ENCODE measurements at regions of chr20 and their contacts with region 1.

Region 1: GRCh38 chr20:32674362-32674789 is 635 bp upstream of the C20orf203 start:
- DNase-seq: peak; percentile 64
- ATAC-seq: peak; percentile 51
- H3K4me3 ChIP-seq: peak overlapping the region in 1 of 3 experiments; percentile 71; a peak in 1 of 6 replicates
- H3K27ac ChIP-seq: no peak overlapping the region
- H3K4me1 ChIP-seq: peaks cover 65% of the 10 kb centered on the region
- H3K27me3 ChIP-seq: no peaks in the 10 kb centered on the region
- CTCF ChIP-seq: peak; percentile 92
- EP300 ChIP-seq: no peak
- POLR2A ChIP-seq: no peak
- RAD21 ChIP-seq: peak; percentile 98

Region 2: DNA sequence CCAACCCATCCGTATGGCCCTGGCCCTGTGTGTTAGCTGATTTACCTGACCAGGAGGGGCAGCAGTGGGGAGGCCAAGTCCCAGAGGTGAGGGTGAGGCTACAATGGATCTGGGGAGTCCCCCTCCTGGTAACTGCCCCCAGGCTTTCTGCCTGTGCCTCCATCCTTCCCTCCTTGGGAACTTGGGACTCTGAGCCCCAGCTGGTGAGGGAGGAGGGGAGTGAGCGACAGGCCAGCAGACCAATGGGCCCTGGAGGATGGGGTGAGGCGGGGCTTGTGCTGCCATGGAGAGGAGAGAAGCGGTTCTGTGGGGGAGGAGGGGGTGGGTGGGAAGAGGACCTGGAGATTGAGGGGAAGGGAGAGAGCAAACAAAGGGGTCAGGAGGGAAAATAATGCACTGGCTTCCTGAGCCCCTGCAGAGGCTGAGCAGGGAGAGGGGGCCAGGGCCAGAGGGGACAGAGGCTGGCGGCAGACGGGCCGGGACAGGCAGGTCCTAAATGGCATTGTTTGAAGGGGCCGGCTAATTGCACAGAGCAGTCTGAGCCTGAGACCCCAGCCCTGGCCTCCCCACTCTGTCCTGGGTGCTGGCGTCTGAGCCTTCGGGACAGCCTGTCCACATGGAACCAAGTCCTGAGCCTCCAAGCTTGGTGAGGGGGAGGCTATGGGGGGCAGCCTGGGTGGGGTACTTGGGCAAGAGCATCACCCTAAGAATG is 105.3 kb after region 1 on chr20:
- CTCF ChIA-PET with region 1: interaction called, 203 read pairs
- POLR2A ChIA-PET with region 1: interaction called, 54 read pairs
- in situ Hi-C with region 1: loop called (anchors 5 kb)
- intact Hi-C with region 1: loop called (anchors 1 kb)
- DNase-seq: no peak
- ATAC-seq: peak; percentile 7; the same call in 1 of the 3 replicates
- H3K4me3 ChIP-seq: no peak overlapping the region
- H3K27ac ChIP-seq: no peak overlapping the region
- H3K4me1 ChIP-seq: peaks cover 35% of the 10 kb centered on the region
- H3K27me3 ChIP-seq: no peaks in the 10 kb centered on the region
- CTCF ChIP-seq: no peak; the same call in 1 of the 2 replicates
- EP300 ChIP-seq: no peak
- POLR2A ChIP-seq: no peak
- RAD21 ChIP-seq: no peak